Vagina (tissue), 2 donors: ENCODE measurements at regions of chr10 and their contacts with region 1.

Region 1: GRCh38 chr10:114470956-114471905 is 66.9 kb upstream of the AFAP1L2 start:
- DNase-seq: no peak
- H3K4me3 ChIP-seq: no peak overlapping the region
- H3K27ac ChIP-seq: no peak overlapping the region
- H3K4me1 ChIP-seq: no peaks in the 10 kb centered on the region
- H3K27me3 ChIP-seq: no peaks in the 10 kb centered on the region
- CTCF ChIP-seq: peak; percentile 75 to 88 (median 87)
- POLR2A ChIP-seq: no peak

Region 2: GRCh38 chr10:114458955-114459354 is 12.3 kb before region 1 on chr10:
- intact Hi-C with region 1: no loop called
- DNase-seq: no peak
- H3K4me3 ChIP-seq: no peak overlapping the region
- H3K27ac ChIP-seq: no peak overlapping the region
- H3K4me1 ChIP-seq: no peaks in the 10 kb centered on the region
- H3K27me3 ChIP-seq: no peaks in the 10 kb centered on the region
- CTCF ChIP-seq: peak in 1 of 3 experiments; percentile 14
- POLR2A ChIP-seq: no peak

Region 3: DNA sequence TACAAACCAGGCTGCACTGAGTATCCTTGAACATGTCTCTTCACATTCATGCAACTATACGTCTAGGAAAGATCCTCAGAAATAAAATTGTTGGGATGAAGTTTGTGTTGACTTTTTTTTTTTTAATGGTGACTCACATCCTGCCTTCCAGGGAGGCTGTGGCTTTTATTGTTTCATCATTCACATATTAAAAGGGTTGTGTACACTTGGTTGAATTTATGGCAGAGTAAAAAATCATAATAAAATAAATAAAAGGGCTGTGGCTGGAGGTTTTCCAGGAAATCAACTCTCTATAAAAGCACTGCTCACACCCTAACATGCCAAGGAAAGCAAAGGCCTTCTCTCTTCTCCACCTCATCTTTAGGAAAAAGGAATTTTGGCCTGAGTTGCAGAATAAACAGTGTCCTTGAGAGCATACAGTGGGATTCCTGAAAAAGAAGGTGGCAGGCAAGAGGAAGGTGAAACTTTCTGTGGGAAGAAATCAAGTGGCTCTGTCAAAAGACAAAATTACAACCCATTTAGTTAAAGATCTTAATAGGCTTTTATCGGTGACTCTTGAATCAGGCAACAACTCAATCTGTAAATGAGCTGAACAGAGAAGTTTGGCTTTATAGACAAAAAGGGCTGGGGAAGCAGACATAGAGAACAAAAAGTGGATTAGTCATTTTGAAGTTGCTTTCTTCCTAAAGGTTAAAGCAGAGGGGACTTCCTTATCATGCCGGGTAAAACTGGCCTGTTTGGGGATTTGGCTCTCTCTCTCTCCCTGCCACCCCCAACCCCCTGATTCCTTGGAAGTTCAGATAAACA is 308.8 kb after region 1 on chr10:
- intact Hi-C with region 1: loop called (anchors 10 kb)
- DNase-seq: no peak
- H3K4me3 ChIP-seq: no peak overlapping the region
- H3K27ac ChIP-seq: peak overlapping the region; percentile 51
- H3K4me1 ChIP-seq: peaks cover 18% of the 10 kb centered on the region
- H3K27me3 ChIP-seq: no peaks in the 10 kb centered on the region
- CTCF ChIP-seq: no peak
- POLR2A ChIP-seq: no peak